ENCODE measurements at regions of chr2 and their contacts with region 1.

Region 1: DNA sequence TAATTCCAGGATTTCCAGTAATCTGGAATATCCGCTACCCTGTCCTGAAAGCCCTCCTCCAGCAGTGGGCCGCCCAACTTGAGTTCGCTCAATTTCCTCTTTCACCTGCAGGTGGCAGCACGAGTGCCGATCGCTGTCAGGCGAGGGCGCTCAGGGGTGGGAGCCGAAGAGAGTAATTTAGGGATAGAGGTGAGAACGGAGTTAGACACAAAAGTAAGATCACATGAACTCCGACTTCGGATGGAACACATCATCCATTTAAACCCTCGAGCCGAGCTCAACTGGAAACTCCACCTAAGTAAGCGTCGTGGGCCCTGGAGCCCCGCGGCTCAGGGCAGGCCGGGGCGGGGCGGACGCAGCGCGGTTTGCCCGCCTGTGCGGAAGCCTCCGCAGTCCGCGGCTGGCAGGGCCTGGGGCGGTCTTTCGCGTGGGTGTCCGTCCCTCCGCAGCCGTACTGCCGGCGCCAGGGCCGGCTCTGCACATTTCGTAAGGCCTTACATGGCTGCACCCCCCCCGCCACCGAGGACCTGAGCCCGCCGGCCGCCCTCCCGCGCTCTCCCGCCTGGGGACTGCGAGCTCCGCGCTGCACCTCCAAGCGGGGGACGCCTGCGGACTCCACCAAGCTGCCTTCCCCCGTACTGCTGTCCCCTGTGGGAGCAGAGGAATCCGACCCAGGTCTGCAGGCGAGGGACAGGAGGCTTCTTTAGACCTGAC is 61.2 kb downstream of the SEMA4F start:
- DNase-seq: peak; percentile 87
- CTCF ChIP-seq: peak; percentile 97

Region 2: DNA sequence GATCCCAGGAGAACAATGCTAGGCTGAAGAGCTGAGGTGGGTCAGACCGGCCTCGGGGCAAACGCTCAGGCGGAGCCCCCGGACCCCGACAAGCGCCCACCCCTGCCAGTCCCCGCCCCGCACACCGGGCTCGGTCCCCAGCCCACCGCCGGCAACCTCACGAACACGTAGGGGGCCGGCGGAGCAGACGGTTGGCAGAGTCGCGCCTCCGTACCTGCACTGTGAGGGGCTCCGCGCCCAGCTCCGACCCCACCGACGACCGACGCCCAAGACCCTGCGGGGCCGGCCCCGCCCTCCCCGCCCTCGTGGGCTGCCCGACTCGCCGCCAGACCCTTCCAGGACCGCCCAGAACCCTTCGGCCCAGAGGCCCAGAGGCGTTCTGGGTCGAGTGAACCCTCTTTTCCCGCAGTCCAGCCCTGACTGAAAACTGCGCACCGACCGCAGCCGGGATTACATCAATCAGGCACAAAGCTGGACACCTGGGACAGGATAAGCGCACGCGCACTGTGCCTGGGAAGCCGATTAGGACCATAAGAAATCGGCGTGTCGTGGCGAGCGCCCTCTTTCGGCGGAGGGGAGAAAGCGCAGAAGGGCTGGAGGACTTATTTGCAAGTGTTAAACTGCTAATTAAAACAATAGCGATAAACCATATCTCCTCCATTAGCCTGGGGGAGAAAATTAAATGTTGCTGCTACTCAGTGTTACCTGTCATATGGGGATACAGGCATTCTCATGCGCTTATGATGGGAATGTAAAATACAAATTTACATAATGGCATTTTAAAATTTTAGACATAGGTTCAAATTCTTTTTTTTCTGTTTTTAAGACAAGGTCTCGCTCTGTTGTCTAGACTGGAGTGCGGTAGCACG is 323.4 kb before region 1 on chr2:
- CTCF ChIA-PET with region 1: no interaction called
- POLR2A ChIA-PET with region 1: no interaction called
- DNase-seq: peak; percentile 94
- CTCF ChIP-seq: peak; percentile 95

Region 3: DNA sequence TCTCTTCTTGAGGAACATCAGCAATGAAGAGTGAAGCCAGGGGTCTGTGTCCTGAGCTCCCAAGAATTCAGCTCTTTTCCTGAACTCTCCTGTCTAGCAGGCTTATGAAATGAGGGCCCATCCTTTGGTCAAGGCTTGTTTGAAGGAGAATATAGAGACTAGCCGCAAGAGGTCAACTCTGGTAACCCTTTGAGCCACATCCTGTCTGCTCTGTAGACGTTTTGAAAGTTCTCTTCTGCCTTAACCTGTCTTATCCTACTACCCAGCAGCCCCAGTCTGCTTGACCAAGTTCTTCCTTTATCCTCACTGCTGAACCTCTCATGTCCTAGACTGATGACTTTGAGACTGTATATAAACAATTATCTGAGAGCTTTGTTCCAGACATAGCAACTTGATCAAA is 55.8 kb before region 1 on chr2:
- CTCF ChIA-PET with region 1: no interaction called
- POLR2A ChIA-PET with region 1: no interaction called
- DNase-seq: no peak
- CTCF ChIP-seq: no peak

Region 4: DNA sequence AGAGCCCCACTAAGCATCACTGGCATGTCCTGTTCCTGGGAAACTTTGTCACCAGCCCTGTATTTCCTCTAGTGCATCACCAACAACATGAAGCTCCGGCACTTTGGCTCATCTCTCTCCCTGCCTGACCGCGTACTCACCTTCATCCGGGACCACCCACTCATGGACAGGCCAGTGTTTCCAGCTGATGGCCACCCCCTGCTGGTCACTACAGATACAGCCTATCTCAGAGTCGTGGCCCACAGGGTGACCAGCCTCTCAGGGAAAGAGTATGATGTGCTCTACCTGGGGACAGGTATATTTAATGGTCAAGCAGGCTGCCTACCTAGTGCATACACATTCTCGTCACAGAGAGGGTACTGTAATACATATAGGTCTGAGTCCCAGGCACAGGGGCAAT is 40.1 kb before region 1 on chr2:
- CTCF ChIA-PET with region 1: interaction called, 11 read pairs
- POLR2A ChIA-PET with region 1: no interaction called
- DNase-seq: no peak
- CTCF ChIP-seq: no peak

Region 5: DNA sequence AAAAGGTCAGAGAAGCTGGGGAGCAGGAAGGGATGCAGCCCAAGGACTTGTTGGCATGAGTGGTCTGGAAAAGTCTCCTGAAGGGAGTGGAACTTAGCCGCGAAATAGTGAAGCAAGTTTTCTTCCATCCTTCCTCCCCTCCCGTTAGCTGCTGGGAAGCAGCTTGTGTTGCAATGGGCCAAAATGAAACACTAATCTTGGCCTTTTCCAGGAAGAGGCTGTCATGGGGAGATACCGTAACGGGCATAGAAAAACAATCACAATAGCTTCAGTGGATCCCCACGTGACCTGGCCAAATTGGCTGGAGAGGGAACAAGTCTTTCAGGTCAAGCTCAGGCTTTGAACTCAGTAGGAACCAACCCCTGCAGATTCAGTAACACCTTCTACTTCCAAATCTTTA is 11.9 kb before region 1 on chr2:
- CTCF ChIA-PET with region 1: interaction called, 31 read pairs
- POLR2A ChIA-PET with region 1: no interaction called
- DNase-seq: no peak
- CTCF ChIP-seq: no peak

Region 6: DNA sequence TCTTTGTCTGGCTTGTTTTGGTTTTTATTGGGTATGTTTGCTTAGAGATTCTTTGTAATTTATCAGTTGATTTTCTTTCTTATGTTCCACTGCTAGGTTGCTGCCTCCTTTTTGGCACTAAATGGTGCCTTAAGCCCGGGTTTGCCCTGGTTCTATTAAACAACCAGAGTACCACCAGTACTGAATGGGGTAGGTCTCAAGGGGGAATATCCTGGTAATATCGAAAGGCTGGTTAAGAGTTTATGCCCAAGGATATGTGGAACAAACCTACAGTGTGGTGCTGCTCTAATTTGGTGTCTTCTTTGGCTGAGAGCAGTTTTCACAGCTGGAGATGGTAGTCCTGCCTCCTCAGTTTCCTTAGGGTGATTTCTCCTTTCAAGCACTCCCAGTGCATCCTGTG is 15.3 kb after region 1 on chr2:
- CTCF ChIA-PET with region 1: interaction called, 12 read pairs
- POLR2A ChIA-PET with region 1: no interaction called
- DNase-seq: no peak
- CTCF ChIP-seq: no peak

Measured in GM10248 (cell line).